Activated T-helper 2 cell treated with anti-CD3 and anti-CD28 coated beads, Interferon-gamma antibody, Interleukin-2, Interleukin-4, amounts not matched to agents 10 μg/mL and 5 μg/mL and 100 μg/mL, durations not matched to agents 14 hours and 24 hours and 36 hours (primary cell): ENCODE measurements at regions of chr15 and their contacts with region 1.

Region 1: GRCh38 chr15:60899322-60899966 is 329.7 kb downstream of the RORA start:
- DNase-seq: no peak
- H3K4me3 Mint-ChIP-seq: no peak overlapping the region
- H3K27ac Mint-ChIP-seq: peak overlapping the region; percentile 64
- H3K4me1 Mint-ChIP-seq: peaks cover 52% of the 10 kb centered on the region
- H3K27me3 Mint-ChIP-seq: peaks cover 14% of the 10 kb centered on the region

Region 2: GRCh38 chr15:60507596-60508424 is 391.6 kb before region 1 on chr15:
- intact Hi-C with region 1: loop called (anchors 5 kb)
- DNase-seq: peak; percentile 43
- H3K4me3 Mint-ChIP-seq: no peak overlapping the region
- H3K27ac Mint-ChIP-seq: peak overlapping the region; percentile 11
- H3K4me1 Mint-ChIP-seq: peaks cover 29% of the 10 kb centered on the region
- H3K27me3 Mint-ChIP-seq: no peaks in the 10 kb centered on the region

Region 3: GRCh38 chr15:60695713-60696522 is 203.5 kb before region 1 on chr15:
- intact Hi-C with region 1: loop called (anchors 10 kb)
- DNase-seq: peak; percentile 35
- H3K4me3 Mint-ChIP-seq: peak overlapping the region; percentile 22
- H3K27ac Mint-ChIP-seq: peak overlapping the region; percentile 49
- H3K4me1 Mint-ChIP-seq: peaks cover 52% of the 10 kb centered on the region
- H3K27me3 Mint-ChIP-seq: peaks cover 25% of the 10 kb centered on the region

Region 4: GRCh38 chr15:60804986-60805949 is 94.2 kb before region 1 on chr15:
- intact Hi-C with region 1: loop called (anchors 1 kb)
- DNase-seq: no peak
- H3K4me3 Mint-ChIP-seq: no peak overlapping the region
- H3K27ac Mint-ChIP-seq: no peak overlapping the region
- H3K4me1 Mint-ChIP-seq: peaks cover 29% of the 10 kb centered on the region
- H3K27me3 Mint-ChIP-seq: peaks cover 38% of the 10 kb centered on the region

Region 5: DNA sequence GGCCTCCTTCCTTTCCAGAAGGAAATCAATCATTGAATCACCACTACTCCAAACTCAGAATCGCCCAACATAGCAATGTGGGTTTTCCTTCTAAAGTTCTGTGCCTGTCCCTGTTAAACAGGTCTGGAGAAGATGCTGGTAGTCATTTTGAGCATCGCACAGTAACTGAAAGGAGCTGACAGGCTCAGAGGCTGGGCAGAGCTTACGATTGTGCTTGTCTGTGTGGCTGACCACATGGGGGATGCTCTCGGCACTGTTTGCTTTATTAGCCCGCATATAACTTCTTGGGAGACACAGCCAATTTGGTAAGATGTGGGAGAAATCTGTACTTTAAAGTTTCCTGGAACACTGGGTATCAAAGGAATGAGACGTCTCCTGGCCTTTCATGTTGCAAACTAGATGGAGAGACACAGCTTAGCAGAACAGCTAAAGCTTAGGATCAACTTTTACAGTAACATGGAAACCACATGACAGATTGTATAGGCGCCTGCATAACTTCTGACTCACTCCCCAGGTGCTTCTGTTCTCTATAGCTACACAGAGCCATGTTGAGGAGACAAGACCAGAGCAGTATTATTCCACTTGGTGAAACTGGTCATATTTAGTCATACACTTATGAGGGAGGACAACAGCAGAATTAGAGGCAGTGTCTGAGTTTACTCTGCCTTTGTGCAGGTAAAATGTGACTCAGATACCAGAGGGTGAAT is 44.4 kb before region 1 on chr15:
- intact Hi-C with region 1: loop called (anchors 1 kb)
- DNase-seq: no peak
- H3K4me3 Mint-ChIP-seq: no peak overlapping the region
- H3K27ac Mint-ChIP-seq: no peak overlapping the region
- H3K4me1 Mint-ChIP-seq: peaks cover 26% of the 10 kb centered on the region
- H3K27me3 Mint-ChIP-seq: peaks cover 44% of the 10 kb centered on the region